CD4-positive, alpha-beta T cell (primary cell): ENCODE measurements at regions of chr2 and their contacts with region 1.

Region 1: GRCh38 chr2:118882709-118883210 is 35.3 kb upstream of the EN1 start:
- DNase-seq: peak; percentile 50 to 83 (median 64)
- ATAC-seq: peak; percentile 90
- H3K4me3 ChIP-seq: peak overlapping the region; percentile 49
- H3K4me3 Mint-ChIP-seq: peak overlapping the region; percentile 86
- H3K27ac ChIP-seq: no peak overlapping the region
- H3K27ac Mint-ChIP-seq: peak overlapping the region; percentile 61
- H3K4me1 ChIP-seq: peaks cover 20% of the 10 kb centered on the region
- H3K4me1 Mint-ChIP-seq: peaks cover 24% of the 10 kb centered on the region
- H3K27me3 ChIP-seq: peaks cover 11 to 19% of the 10 kb centered on the region in 2 experiments
- H3K27me3 Mint-ChIP-seq: peaks cover 15% of the 10 kb centered on the region
- CTCF ChIP-seq: peak; percentile 90

Region 2: DNA sequence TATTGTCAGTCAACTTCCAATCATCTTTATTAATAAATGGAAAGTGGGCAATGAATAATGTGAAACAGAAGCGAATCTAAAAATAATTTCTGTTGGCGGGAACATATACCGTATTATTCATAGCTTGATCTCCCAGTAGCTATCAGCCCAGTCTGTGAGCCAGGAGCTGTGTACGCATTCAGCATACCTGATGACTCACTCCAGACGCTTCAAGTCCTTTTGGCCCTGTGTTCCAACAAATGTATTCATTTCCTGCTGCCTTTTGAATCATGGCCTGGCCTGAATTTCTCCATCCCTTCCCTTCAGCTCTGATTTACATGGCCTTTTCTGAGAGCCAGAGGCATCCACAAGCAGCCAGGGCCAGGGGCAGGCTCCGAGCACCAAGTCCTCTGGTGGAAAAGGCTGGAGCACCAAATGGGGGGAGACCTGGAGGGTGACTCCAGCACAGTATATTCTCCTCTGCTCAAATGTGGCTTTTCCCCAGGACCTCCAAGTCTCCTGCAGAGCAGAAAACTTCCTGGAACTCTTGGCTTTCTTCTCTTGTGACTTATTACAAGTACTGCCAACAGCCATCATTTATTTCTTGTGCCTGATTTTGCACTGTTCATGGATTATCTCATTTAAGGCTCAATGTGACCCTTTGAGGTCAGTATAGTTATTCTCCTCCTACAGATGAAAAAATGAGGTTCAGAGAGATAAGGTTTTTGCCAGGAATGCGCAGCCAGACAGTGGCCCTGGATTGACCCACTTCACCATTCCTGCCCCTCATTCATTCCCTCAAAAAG is 144.0 kb before region 1 on chr2:
- CTCF ChIA-PET with region 1: no interaction called
- POLR2A ChIA-PET with region 1: no interaction called
- intact Hi-C with region 1: no loop called
- DNase-seq: no peak
- ATAC-seq: no peak
- H3K4me3 ChIP-seq: no peak overlapping the region
- H3K4me3 Mint-ChIP-seq: no peak overlapping the region
- H3K27ac ChIP-seq: no peak overlapping the region
- H3K27ac Mint-ChIP-seq: no peak overlapping the region
- H3K4me1 ChIP-seq: no peaks in the 10 kb centered on the region
- H3K4me1 Mint-ChIP-seq: no peaks in the 10 kb centered on the region
- H3K27me3 ChIP-seq: peaks cover 0 to 4% of the 10 kb centered on the region in 2 experiments
- H3K27me3 Mint-ChIP-seq: peaks cover 27% of the 10 kb centered on the region
- CTCF ChIP-seq: no peak

Region 3: GRCh38 chr2:118902266-118903028 is 19.7 kb after region 1 on chr2:
- CTCF ChIA-PET with region 1: interaction called, 3 read pairs
- POLR2A ChIA-PET with region 1: interaction called, 17 read pairs
- intact Hi-C with region 1: loop called in 1 of 2 experiments (anchors 1 kb)
- DNase-seq: peak in 4 of 14 experiments; percentile 8 to 36 (median 33)
- ATAC-seq: peak; percentile 52
- H3K4me3 ChIP-seq: no peak overlapping the region
- H3K4me3 Mint-ChIP-seq: peak overlapping the region; percentile 59
- H3K27ac ChIP-seq: peak overlapping the region in 1 of 2 donors; percentile 29
- H3K27ac Mint-ChIP-seq: peak overlapping the region; percentile 74
- H3K4me1 ChIP-seq: peaks cover 25% of the 10 kb centered on the region
- H3K4me1 Mint-ChIP-seq: peaks cover 32% of the 10 kb centered on the region
- H3K27me3 ChIP-seq: no peaks in the 10 kb centered on the region
- H3K27me3 Mint-ChIP-seq: no peaks in the 10 kb centered on the region
- CTCF ChIP-seq: no peak

Region 4: GRCh38 chr2:118954297-118955060 is 71.7 kb after region 1 on chr2:
- CTCF ChIA-PET with region 1: no interaction called
- POLR2A ChIA-PET with region 1: no interaction called
- intact Hi-C with region 1: no loop called
- DNase-seq: peak in 3 of 14 experiments; percentile 26 to 61 (median 53)
- ATAC-seq: no peak
- H3K4me3 ChIP-seq: no peak overlapping the region
- H3K4me3 Mint-ChIP-seq: no peak overlapping the region
- H3K27ac ChIP-seq: no peak overlapping the region
- H3K27ac Mint-ChIP-seq: no peak overlapping the region
- H3K4me1 ChIP-seq: no peaks in the 10 kb centered on the region
- H3K4me1 Mint-ChIP-seq: no peaks in the 10 kb centered on the region
- H3K27me3 ChIP-seq: peaks cover 0 to 3% of the 10 kb centered on the region in 2 experiments
- H3K27me3 Mint-ChIP-seq: peaks cover 25% of the 10 kb centered on the region
- CTCF ChIP-seq: no peak

Region 5: DNA sequence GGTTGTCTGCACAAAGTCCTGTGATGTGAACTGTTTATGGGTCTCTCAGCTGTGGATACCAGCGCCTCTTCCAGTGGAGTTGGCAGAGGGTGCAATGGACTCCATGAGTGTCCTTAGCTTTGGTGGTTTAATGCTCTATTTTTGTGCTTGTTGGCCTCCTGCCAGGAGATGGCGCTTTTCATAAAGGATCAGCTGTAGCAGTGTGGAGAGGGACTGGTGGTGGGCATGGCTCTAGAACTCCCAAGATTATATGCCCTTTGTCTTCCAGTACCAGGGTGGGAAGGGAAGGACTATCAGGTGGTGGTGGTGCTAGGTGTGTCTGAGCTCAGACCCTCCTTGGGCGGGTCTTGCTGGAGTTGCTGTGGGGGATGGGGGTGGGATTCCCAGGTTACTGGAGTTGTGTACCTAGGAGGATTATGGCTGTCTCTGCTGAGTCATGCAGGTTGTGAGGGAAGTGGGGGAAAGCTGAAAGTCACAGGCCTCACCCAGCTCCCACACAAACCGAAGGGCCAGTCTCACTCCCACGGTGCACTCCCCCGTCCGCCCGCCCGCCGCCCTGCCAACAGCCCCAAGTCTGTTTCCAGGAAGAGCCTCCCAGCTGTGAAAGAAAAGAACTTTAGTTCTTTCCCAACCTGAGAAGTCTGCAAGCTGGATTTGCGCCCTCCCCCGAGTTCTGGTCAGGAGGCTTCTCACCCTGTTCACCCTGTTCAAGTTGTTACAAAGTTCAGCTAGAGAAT is 167.4 kb after region 1 on chr2:
- CTCF ChIA-PET with region 1: no interaction called
- POLR2A ChIA-PET with region 1: no interaction called
- intact Hi-C with region 1: loop called in 1 of 2 experiments (anchors 5 kb)
- DNase-seq: no peak
- ATAC-seq: no peak
- H3K4me3 ChIP-seq: no peak overlapping the region
- H3K4me3 Mint-ChIP-seq: no peak overlapping the region
- H3K27ac ChIP-seq: no peak overlapping the region
- H3K27ac Mint-ChIP-seq: no peak overlapping the region
- H3K4me1 ChIP-seq: no peaks in the 10 kb centered on the region
- H3K4me1 Mint-ChIP-seq: no peaks in the 10 kb centered on the region
- H3K27me3 ChIP-seq: peaks cover 0 to 11% of the 10 kb centered on the region in 2 experiments
- H3K27me3 Mint-ChIP-seq: peaks cover 64% of the 10 kb centered on the region
- CTCF ChIP-seq: no peak

Region 6: GRCh38 chr2:119174216-119175037 is 291.7 kb after region 1 on chr2:
- CTCF ChIA-PET with region 1: interaction called, 14 read pairs
- POLR2A ChIA-PET with region 1: interaction called, 4 read pairs
- intact Hi-C with region 1: loop called (anchors 1 kb)
- DNase-seq: peak; percentile 22 to 69 (median 48)
- ATAC-seq: peak; percentile 59
- H3K4me3 ChIP-seq: no peak overlapping the region
- H3K4me3 Mint-ChIP-seq: no peak overlapping the region
- H3K27ac ChIP-seq: no peak overlapping the region
- H3K27ac Mint-ChIP-seq: no peak overlapping the region
- H3K4me1 ChIP-seq: peaks cover 2% of the 10 kb centered on the region
- H3K4me1 Mint-ChIP-seq: no peaks in the 10 kb centered on the region
- H3K27me3 ChIP-seq: no peaks in the 10 kb centered on the region
- H3K27me3 Mint-ChIP-seq: peaks cover under 1% of the 10 kb centered on the region
- CTCF ChIP-seq: peak; percentile 90

Region 7: GRCh38 chr2:119223521-119224390 is 341.0 kb after region 1 on chr2 and contains the start of gene STEAP3:
- CTCF ChIA-PET with region 1: no interaction called
- POLR2A ChIA-PET with region 1: no interaction called
- intact Hi-C with region 1: no loop called
- DNase-seq: peak in 2 of 14 experiments; percentile 21 to 28
- ATAC-seq: no peak
- H3K4me3 ChIP-seq: no peak within 1 kb of the TSS
- H3K4me3 Mint-ChIP-seq: peak within 1 kb of the TSS; percentile 60
- H3K27ac ChIP-seq: no peak within 1 kb of the TSS
- H3K27ac Mint-ChIP-seq: no peak within 1 kb of the TSS
- H3K4me1 ChIP-seq: peaks cover 4% of the 10 kb centered on the region
- H3K4me1 Mint-ChIP-seq: no peaks in the 10 kb centered on the region
- H3K27me3 ChIP-seq: peaks cover 15 to 46% of the 10 kb centered on the region in 2 experiments
- H3K27me3 Mint-ChIP-seq: peaks cover 64% of the 10 kb centered on the region
- CTCF ChIP-seq: no peak
- total RNA-seq, gene STEAP3: not detected

Region 8: DNA sequence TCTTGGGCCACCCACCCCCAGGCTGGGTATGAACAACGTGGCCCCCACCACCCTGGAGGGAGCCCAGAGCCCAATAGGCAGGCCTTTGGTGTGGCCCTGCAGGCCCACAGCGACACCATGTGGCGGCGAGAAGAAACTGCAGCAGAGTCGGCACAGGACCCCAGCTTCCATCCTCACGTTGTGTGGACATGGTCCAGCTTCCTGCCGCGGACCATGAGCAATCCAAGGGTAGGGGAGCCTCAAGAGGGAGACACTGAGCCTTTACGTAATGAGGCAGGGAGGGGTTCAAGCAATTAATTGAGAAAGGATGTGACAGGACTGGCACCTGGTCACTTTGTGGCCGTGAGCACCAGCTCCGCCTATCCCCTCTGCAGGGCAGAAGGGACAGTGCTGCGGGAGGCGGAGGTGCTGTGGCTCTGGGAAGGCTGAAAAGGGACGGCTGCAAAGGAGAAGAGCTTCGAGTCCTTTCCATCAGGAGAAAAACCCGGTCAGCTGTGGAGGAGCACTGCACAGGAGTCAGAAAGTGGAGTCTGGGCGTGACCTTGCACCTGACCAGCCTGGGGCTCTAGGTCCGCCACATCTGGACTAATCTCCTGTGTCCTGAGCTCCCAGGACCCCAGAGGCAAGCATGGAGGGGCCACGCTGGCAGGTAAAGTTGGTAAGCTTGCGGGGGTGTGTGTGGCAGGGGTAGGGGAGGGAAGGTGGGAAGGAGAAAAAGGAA is 593.7 kb after region 1 on chr2:
- CTCF ChIA-PET with region 1: interaction called, 7 read pairs
- POLR2A ChIA-PET with region 1: interaction called, 5 read pairs
- intact Hi-C with region 1: loop called in 1 of 2 experiments (anchors 1 kb)
- DNase-seq: peak in 8 of 14 experiments; percentile 5 to 60 (median 16)
- ATAC-seq: peak; percentile 21
- H3K4me3 ChIP-seq: no peak overlapping the region
- H3K4me3 Mint-ChIP-seq: no peak overlapping the region
- H3K27ac ChIP-seq: no peak overlapping the region
- H3K27ac Mint-ChIP-seq: no peak overlapping the region
- H3K4me1 ChIP-seq: no peaks in the 10 kb centered on the region
- H3K4me1 Mint-ChIP-seq: no peaks in the 10 kb centered on the region
- H3K27me3 ChIP-seq: no peaks in the 10 kb centered on the region
- H3K27me3 Mint-ChIP-seq: peaks cover 20% of the 10 kb centered on the region
- CTCF ChIP-seq: peak; percentile 68

Region 9: DNA sequence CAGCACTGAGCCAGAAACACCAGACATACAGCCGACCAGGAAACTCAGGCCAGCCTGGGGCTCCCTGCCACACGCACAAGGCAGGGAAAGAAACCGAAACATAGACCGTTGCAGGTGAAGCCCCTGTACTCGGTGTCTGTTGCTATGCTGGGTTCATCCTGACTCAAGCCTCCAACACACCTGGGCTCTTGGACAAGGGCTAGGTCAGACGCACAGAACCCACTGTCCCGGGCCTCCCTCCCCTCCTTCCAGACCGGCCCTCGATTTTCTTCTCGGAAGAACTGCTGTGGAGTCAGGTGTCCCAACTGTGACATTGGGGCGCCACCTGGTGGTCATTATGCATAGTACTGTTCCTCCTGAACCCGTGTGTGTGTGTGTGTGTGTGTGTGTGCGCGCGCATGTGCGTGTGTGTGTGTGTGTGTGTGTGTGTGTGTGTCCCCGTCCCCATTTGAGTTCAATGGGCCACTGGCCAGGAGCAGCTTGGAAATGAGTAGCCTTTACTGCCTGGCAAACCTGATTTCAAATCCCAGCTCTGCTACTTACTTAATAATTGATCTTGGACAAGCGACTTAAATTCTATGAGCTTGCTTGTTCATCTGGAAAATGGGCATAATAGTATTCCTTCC is 1797.5 kb after region 1 on chr2:
- CTCF ChIA-PET with region 1: no interaction called
- POLR2A ChIA-PET with region 1: no interaction called
- intact Hi-C with region 1: loop called in 1 of 2 experiments (anchors 10 kb)
- DNase-seq: peak; percentile 52 to 84 (median 66)
- ATAC-seq: peak; percentile 81
- H3K4me3 ChIP-seq: no peak overlapping the region
- H3K4me3 Mint-ChIP-seq: peak overlapping the region; percentile 74
- H3K27ac ChIP-seq: no peak overlapping the region
- H3K27ac Mint-ChIP-seq: peak overlapping the region; percentile 27
- H3K4me1 ChIP-seq: peaks cover 5% of the 10 kb centered on the region
- H3K4me1 Mint-ChIP-seq: no peaks in the 10 kb centered on the region
- H3K27me3 ChIP-seq: peaks cover 6 to 15% of the 10 kb centered on the region in 2 experiments
- H3K27me3 Mint-ChIP-seq: peaks cover 42% of the 10 kb centered on the region
- CTCF ChIP-seq: peak; percentile 44